ENCODE measurements at regions of chr7 and their contacts with region 1.

Region 1: DNA sequence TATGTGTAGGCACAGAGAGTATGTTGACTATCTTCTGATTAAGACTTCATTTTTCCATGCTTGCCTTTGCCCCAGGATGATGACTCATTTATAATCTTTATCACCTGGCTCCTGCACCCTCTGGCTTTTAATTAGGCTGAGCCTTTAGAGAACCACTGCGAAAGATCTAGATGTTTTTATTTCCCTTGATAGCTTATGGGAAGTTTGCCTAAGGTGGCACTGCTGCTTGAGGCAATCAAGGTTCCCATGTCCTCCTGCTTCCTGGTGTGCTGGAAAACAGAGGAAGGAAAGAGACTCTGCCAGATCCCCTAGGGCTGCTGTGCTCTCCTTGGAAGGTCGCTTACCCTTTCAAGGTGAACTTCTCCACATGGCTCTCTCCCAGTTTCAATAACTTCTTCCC is 114.7 kb downstream of the ARL4A start:
- DNase-seq: peak; percentile 33
- ATAC-seq: peak; percentile 39
- H3K4me3 ChIP-seq: peak overlapping the region; percentile 44; the same call in 1 of the 2 replicates
- H3K27ac ChIP-seq: peak overlapping the region; percentile 60
- H3K4me1 ChIP-seq: peaks cover 41% of the 10 kb centered on the region
- H3K27me3 ChIP-seq: no peaks in the 10 kb centered on the region
- CTCF ChIP-seq: no peak

Region 2: GRCh38 chr7:12706876-12707536 is 95.1 kb before region 1 on chr7:
- CTCF ChIA-PET with region 1: no interaction called
- POLR2A ChIA-PET with region 1: no interaction called
- intact Hi-C with region 1: loop called (anchors 1 kb)
- DNase-seq: peak; percentile 91
- ATAC-seq: peak; percentile 84
- H3K4me3 ChIP-seq: peak overlapping the region; percentile 26; the same call in 1 of the 2 replicates
- H3K27ac ChIP-seq: peak overlapping the region; percentile 85
- H3K4me1 ChIP-seq: peaks cover 57% of the 10 kb centered on the region
- H3K27me3 ChIP-seq: no peaks in the 10 kb centered on the region
- CTCF ChIP-seq: no peak

Region 3: DNA sequence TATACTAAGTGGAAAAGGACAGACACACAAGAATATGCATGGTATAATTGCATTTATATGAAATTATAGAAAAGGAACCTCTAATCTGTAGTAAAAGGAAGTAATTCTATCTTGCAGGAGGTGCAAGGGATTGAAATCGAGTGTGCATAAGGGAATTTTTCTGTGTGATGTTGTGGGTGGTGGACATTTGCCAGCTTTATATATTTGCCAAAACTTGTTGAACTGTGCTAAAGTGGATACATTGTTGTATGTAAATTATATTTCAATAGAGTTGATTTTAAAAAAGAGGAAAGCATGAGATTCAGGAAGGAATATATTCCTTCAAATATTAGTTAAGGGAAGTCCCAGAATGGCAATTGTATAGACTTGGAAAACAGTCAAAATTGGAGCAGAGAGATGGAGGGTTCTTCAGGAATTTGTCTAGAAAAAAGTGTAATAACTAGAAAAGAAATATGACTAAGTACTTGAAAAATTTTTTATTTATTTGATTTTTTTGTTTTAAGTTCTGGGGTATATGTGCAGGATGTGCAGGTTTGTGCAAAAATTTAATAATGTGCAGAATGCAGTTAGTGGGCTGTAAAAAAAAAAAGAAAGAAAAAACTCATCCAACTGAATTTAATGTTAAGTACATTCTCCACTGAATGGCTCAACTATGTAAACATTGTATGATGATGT is 18.5 kb before region 1 on chr7:
- CTCF ChIA-PET with region 1: interaction called, 4 read pairs
- POLR2A ChIA-PET with region 1: no interaction called
- intact Hi-C with region 1: loop called (anchors 2 kb)
- DNase-seq: no peak
- ATAC-seq: peak; percentile 43
- H3K4me3 ChIP-seq: no peak overlapping the region
- H3K27ac ChIP-seq: no peak overlapping the region
- H3K4me1 ChIP-seq: peaks cover 22% of the 10 kb centered on the region
- H3K27me3 ChIP-seq: no peaks in the 10 kb centered on the region
- CTCF ChIP-seq: no peak

Region 4: DNA sequence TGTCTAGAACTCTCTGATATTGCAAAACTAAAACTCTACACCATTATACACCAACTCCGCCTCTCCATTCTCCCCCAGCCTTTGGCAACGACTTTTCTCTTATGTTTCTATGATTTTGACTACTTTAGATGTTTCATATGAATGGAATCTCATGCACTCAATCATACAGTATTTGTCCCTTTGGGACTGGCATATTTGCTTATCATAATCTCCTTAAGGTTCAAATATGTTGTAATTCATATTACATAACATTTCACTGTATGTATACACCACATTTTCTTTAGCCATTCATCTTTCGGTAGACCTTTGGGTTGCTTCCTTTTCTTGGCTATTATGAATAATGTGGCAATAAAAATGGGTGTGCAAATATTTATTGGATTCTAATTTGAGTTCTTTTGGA is 49.7 kb after region 1 on chr7:
- CTCF ChIA-PET with region 1: no interaction called
- POLR2A ChIA-PET with region 1: no interaction called
- intact Hi-C with region 1: no loop called
- DNase-seq: no peak
- ATAC-seq: no peak
- H3K4me3 ChIP-seq: no peak overlapping the region
- H3K27ac ChIP-seq: no peak overlapping the region
- H3K4me1 ChIP-seq: no peaks in the 10 kb centered on the region
- H3K27me3 ChIP-seq: no peaks in the 10 kb centered on the region
- CTCF ChIP-seq: no peak

Region 5: GRCh38 chr7:12868027-12868426 is 65.9 kb after region 1 on chr7:
- CTCF ChIA-PET with region 1: interaction called, 4 read pairs
- POLR2A ChIA-PET with region 1: no interaction called
- intact Hi-C with region 1: loop called (anchors 1 kb)
- DNase-seq: peak; percentile 51
- ATAC-seq: peak; percentile 96
- H3K4me3 ChIP-seq: no peak overlapping the region
- H3K27ac ChIP-seq: no peak overlapping the region
- H3K4me1 ChIP-seq: peaks cover 13% of the 10 kb centered on the region
- H3K27me3 ChIP-seq: no peaks in the 10 kb centered on the region
- CTCF ChIP-seq: no peak

Region 6: DNA sequence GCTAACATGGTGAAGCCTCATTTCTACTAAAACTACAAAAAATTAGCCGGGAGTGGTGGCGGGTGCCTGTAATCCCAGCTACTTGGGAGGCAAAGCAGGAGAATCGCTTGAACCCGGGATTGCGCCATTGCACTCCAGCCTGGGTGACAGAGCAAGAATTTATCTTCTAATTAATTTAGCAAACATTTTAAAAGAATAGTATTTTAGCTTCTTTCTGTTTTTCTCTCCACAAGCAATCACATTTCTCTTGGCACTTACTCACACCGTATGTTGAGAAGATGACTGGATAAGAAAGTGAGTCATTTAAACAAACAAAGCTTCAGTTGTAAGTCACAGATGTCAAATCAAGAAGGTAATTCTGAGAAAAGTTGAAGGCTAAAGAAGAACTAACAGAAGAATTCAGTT is 149.3 kb after region 1 on chr7:
- CTCF ChIA-PET with region 1: no interaction called
- POLR2A ChIA-PET with region 1: no interaction called
- intact Hi-C with region 1: no loop called
- DNase-seq: peak; percentile 82
- ATAC-seq: peak; percentile 99
- H3K4me3 ChIP-seq: peak overlapping the region; percentile 27; the same call in 1 of the 2 replicates
- H3K27ac ChIP-seq: peak overlapping the region; percentile 69
- H3K4me1 ChIP-seq: peaks cover 20% of the 10 kb centered on the region
- H3K27me3 ChIP-seq: no peaks in the 10 kb centered on the region
- CTCF ChIP-seq: no peak

Region 7: DNA sequence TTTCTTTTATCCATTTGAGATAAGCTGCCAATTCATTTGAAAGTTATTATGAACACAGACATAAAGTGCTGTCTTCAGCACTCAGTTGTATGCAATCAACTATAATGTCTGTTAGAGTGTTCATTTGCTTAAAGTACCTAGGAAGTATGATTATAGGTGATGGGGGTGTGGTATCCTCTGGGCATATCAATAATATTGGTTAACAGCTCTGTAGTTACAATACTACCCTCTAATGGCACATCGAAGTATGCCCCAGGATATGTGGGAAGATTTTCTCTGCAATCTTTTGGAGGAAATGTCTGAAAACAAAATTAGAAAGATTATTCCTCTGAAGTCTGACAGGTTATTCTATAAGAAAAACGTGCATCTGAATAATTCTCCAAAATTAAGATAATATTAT is 315.0 kb after region 1 on chr7:
- CTCF ChIA-PET with region 1: no interaction called
- POLR2A ChIA-PET with region 1: no interaction called
- intact Hi-C with region 1: loop called (anchors 1 kb)
- DNase-seq: peak; percentile 57
- ATAC-seq: peak; percentile 35; the same call in 1 of the 2 replicates
- H3K4me3 ChIP-seq: no peak overlapping the region
- H3K27ac ChIP-seq: no peak overlapping the region
- H3K4me1 ChIP-seq: peaks cover 3% of the 10 kb centered on the region; the same call in 1 of the 2 replicates
- H3K27me3 ChIP-seq: no peaks in the 10 kb centered on the region
- CTCF ChIP-seq: peak; percentile 85